Pancreas (tissue), 10 donors: ENCODE measurements at regions of chr21 and their contacts with region 1.

Region 1: GRCh38 chr21:16551101-16551695 is 821.4 kb downstream of the USP25 start:
- DNase-seq: no peak
- ATAC-seq: no peak
- H3K4me3 ChIP-seq: no peak overlapping the region
- H3K27ac ChIP-seq: no peak overlapping the region
- H3K4me1 ChIP-seq: no peaks in the 10 kb centered on the region
- H3K27me3 ChIP-seq: no peaks in the 10 kb centered on the region
- CTCF ChIP-seq: no peak

Region 2: DNA sequence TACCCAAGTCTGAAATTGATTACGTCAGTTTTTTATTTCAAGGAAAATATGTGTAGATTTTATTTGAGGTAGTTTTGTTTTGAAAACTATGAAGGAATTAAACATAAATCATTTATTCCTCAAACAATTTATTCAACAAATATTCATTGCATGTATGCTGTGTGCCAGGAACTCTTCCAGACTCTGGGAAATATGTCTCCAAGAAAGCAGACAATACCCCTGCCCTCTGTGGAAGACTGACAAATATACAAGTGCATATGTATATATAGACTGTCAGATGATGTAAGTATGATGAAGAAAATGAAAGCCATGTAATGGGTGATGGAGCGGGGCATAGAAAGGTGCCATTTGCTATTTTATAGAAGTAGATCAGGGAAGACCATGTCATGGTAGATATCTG is 68.1 kb after region 1 on chr21:
- intact Hi-C with region 1: loop called in 1 of 3 experiments (anchors 10 kb)
- DNase-seq: no peak
- ATAC-seq: no peak
- H3K4me3 ChIP-seq: no peak overlapping the region
- H3K27ac ChIP-seq: no peak overlapping the region
- H3K4me1 ChIP-seq: no peaks in the 10 kb centered on the region
- H3K27me3 ChIP-seq: no peaks in the 10 kb centered on the region
- CTCF ChIP-seq: no peak